ENCODE measurements at regions of chr2 and their contacts with region 1.

Region 1: GRCh38 chr2:20635675-20636584 is 15.0 kb downstream of the HS1BP3 start:
- DNase-seq: peak; percentile 88 to 95 (median 95)
- ATAC-seq: peak; percentile 84 to 85
- H3K4me3 ChIP-seq: no peak overlapping the region
- H3K27ac ChIP-seq: peak overlapping the region; percentile 74
- H3K4me1 ChIP-seq: peaks cover 12% of the 10 kb centered on the region
- H3K27me3 ChIP-seq: no peaks in the 10 kb centered on the region

Region 2: DNA sequence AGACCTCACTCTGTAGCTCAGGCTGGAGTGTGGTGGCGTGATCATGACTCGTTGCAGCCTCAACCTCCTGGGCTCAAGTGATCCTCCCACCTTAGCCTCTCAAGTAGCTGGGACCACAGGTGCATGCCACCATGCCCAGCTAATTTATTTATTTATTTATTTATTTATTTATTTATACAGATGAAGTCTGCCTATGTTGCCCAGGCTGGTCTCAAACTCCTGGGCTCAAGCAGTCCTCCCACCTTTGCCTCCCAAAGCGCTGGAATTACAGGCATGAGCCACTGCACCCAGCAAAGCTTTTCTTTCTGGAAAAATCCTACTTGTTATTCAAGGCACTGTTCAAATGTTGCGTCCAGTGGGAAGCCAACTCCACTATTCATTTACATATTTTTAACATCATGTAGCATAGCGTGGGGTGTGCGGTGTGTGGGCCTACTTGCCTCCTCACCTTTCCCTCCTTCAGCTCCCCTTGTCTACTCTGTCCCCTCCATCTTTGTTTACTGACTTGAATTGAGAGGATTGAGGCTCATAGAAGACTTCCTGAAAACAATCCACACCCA is 195.8 kb before region 1 on chr2:
- intact Hi-C with region 1: loop called in 3 of 4 experiments (anchors 2 to 5 kb)
- DNase-seq: no peak
- ATAC-seq: no peak
- H3K4me3 ChIP-seq: no peak overlapping the region
- H3K27ac ChIP-seq: no peak overlapping the region
- H3K4me1 ChIP-seq: no peaks in the 10 kb centered on the region
- H3K27me3 ChIP-seq: no peaks in the 10 kb centered on the region